OCI-LY7 (cell line): ENCODE measurements at regions of chr3 and their contacts with region 1.

Region 1: DNA sequence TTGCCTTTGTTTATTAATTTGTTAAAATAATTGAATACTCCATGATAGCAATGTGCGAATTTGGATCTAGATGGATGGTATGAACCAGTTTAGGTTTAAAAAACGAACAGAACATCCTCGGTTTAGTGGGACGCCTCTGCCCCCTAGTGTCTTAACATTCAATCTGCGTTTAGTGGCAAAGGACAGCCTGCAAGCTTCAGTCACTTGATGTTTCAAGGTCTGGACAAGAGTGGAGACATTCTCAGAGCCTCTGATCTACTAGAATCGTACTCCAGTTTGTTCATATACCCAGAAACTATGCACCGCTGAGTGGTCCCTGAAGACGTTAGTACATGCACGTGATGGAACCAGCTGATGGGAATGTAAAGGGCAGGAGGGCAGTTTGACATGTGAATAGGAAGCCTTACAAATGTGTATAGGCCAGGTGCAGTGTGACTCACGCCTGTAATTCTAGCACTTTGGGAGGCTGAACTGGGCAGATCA is 17.8 kb upstream of the ATP13A4 start:
- DNase-seq: peak; percentile 62
- H3K4me3 ChIP-seq: no peak overlapping the region
- H3K27ac ChIP-seq: no peak overlapping the region
- H3K4me1 ChIP-seq: no peaks in the 10 kb centered on the region
- CTCF ChIP-seq: peak; percentile 95

Region 2: GRCh38 chr3:192467230-192468140 is 1105.0 kb before region 1 on chr3:
- CTCF ChIA-PET with region 1: no interaction called
- POLR2A ChIA-PET with region 1: no interaction called
- intact Hi-C with region 1: loop called (anchors 5 kb)
- DNase-seq: peak; percentile 69
- H3K4me3 ChIP-seq: no peak overlapping the region
- H3K27ac ChIP-seq: no peak overlapping the region
- H3K4me1 ChIP-seq: no peaks in the 10 kb centered on the region
- CTCF ChIP-seq: peak; percentile 98

Region 3: GRCh38 chr3:192816351-192816750 is 756.1 kb before region 1 on chr3:
- CTCF ChIA-PET with region 1: no interaction called
- POLR2A ChIA-PET with region 1: no interaction called
- intact Hi-C with region 1: loop called (anchors 5 kb)
- DNase-seq: peak; percentile 40
- H3K4me3 ChIP-seq: no peak overlapping the region
- H3K27ac ChIP-seq: no peak overlapping the region
- H3K4me1 ChIP-seq: no peaks in the 10 kb centered on the region
- CTCF ChIP-seq: peak; percentile 89

Region 4: GRCh38 chr3:193465992-193466608 is 106.4 kb before region 1 on chr3:
- CTCF ChIA-PET with region 1: no interaction called
- POLR2A ChIA-PET with region 1: no interaction called
- intact Hi-C with region 1: loop called (anchors 1 kb)
- DNase-seq: no peak
- H3K4me3 ChIP-seq: no peak overlapping the region
- H3K27ac ChIP-seq: no peak overlapping the region
- H3K4me1 ChIP-seq: no peaks in the 10 kb centered on the region
- CTCF ChIP-seq: no peak

Region 5: DNA sequence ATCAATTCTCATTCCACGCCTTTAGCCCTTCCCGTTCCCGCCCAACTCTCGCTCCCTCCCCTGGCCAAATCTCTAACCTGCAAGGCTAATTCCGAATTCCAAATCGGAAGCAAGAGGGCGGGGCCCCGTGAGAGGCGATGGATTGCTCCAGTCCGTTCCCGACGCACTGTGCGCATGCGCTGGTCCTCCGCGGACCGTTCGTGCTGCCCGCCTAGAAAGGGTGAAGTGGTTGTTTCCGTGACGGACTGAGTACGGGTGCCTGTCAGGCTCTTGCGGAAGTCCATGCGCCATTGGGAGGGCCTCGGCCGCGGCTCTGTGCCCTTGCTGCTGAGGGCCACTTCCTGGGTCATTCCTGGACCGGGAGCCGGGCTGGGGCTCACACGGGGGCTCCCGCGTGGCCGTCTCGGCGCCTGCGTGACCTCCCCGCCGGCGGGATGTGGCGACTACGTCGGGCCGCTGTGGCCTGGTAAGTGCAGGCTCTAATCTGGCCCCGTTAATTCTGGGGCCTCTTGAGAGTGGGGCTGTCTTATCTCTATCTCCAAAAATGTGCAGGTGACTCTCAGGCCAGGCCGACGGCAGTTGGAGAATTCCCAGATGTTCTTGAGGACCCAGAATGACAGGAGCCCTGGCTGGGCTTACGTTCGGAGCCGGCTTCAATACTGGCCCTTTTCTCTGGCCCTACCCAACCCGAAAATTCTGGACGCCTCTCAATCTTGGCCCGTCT is 20.6 kb after region 1 on chr3 and contains the start of gene OPA1:
- CTCF ChIA-PET with region 1: no interaction called
- POLR2A ChIA-PET with region 1: no interaction called
- intact Hi-C with region 1: no loop called
- DNase-seq: peak; percentile 96
- H3K4me3 ChIP-seq: peak within 1 kb of the TSS; percentile 84
- H3K27ac ChIP-seq: peak within 1 kb of the TSS; percentile 12
- H3K4me1 ChIP-seq: peaks cover 17% of the 10 kb centered on the region
- CTCF ChIP-seq: no peak
- total RNA-seq, gene OPA1: 43.2 and 50.5 TPM in 2 replicates